Naive thymus-derived CD4-positive, alpha-beta T cell (primary cell): ENCODE measurements at regions of chr3 and their contacts with region 1.

Region 1: DNA sequence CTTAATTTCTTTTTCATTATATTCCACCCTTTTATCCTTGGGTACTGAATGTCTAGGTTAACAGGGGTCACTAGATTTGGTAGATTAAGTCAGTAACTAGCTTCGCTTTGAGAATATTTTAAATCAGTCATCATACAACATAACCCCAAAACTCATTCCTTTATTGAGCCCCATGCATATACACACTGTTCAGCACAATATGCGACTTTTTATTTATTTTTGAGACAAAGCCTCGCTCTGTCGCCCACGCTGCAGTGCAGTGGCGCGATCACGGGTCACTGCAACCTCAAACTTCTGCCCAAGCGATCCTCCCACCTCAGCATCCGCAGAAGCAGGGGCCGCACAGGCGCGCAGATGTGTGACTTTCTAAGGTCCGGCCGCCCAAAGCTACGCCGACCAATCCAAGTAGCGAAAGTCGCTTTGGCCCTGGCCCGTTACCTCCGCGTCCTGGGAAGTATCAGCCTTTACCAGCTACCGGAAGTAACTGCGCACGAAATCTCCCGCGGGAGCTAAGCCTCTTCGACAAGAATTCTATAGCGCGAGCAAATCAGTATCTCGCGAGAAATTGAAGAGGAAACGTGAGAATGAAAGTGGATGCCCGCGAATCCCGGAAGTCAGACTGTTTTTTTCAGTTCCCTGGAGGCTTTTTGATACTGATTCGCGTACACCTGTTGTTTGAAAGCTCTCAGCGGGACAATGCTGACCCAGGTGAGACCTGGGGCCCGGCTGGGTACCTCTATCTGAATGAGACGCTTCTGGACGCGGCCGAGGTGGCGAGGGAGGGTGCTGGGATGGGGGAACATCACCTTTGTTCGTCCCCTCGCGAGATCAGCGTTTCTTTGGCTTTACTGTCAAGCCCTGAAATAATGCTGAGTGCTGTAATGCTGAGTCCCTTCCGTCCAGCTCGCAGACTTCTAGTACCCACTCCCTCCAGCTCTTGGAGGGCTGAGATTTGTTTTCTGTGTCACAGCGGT is at the starts of genes DHFR2 and NSUN3:
- DNase-seq: peak; percentile 70 to 94 (median 90)
- ATAC-seq: peak; percentile 90
- H3K4me3 ChIP-seq: peak within 1 kb of the TSS; percentile 71
- H3K4me3 Mint-ChIP-seq: peak within 1 kb of the TSS; percentile 93 to 100 (median 98)
- H3K27ac ChIP-seq: peak within 1 kb of the TSS; percentile 94
- H3K27ac Mint-ChIP-seq: peak within 1 kb of the TSS; percentile 98 to 100 (median 100)
- H3K4me1 ChIP-seq: peaks cover 18 to 20% of the 10 kb centered on the region in 2 donors
- H3K4me1 Mint-ChIP-seq: peaks cover 30 to 73% (median 59%) of the 10 kb centered on the region in 7 donors
- H3K27me3 ChIP-seq: no peaks in the 10 kb centered on the region
- H3K27me3 Mint-ChIP-seq: no peaks in the 10 kb centered on the region
- total RNA-seq, gene DHFR2: 1.5 to 17.9 (median 9.0) TPM
- total RNA-seq, gene NSUN3: 19.9 to 24.0 (median 20.5) TPM

Region 2: DNA sequence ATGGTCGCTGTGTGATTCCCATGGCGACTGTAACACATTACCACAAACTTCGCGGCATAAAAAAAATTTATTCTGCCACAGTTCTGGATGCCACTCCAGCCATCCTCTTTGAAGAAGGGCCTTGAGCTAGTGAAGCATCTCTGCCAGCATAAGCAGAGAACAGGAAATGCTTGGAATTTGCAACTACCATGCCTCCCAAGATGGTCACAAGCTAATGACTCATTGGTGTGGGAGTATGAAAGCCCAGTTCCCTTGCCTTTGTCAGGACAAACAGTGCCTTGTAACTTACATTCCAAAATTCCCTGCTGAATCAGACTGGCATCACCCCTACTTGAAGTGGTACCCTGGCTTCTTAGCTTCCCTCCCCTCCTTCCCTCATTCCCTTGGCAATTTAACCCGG is 218.7 kb before region 1 on chr3:
- CTCF ChIA-PET with region 1: no interaction called
- POLR2A ChIA-PET with region 1: no interaction called
- intact Hi-C with region 1: loop called in 1 of 2 experiments (anchors 10 kb)
- DNase-seq: no peak
- ATAC-seq: no peak
- H3K4me3 ChIP-seq: no peak overlapping the region
- H3K4me3 Mint-ChIP-seq: no peak overlapping the region
- H3K27ac ChIP-seq: no peak overlapping the region
- H3K27ac Mint-ChIP-seq: no peak overlapping the region
- H3K4me1 ChIP-seq: no peaks in the 10 kb centered on the region
- H3K4me1 Mint-ChIP-seq: peaks cover 0 to 6% (median 0%) of the 10 kb centered on the region in 7 donors
- H3K27me3 ChIP-seq: peaks cover 0 to 3% of the 10 kb centered on the region in 2 donors
- H3K27me3 Mint-ChIP-seq: peaks cover 0 to 6% (median 0%) of the 10 kb centered on the region in 5 donors

Region 3: GRCh38 chr3:93979833-93980676 is 82.7 kb before region 1 on chr3 and contains the start of gene ARL13B:
- CTCF ChIA-PET with region 1: no interaction called
- POLR2A ChIA-PET with region 1: interaction called, 6 read pairs
- intact Hi-C with region 1: loop called (anchors 1 kb)
- DNase-seq: peak; percentile 81 to 95 (median 91)
- ATAC-seq: peak; percentile 100
- H3K4me3 ChIP-seq: peak within 1 kb of the TSS; percentile 95
- H3K4me3 Mint-ChIP-seq: peak within 1 kb of the TSS; percentile 85 to 94 (median 88)
- H3K27ac ChIP-seq: peak within 1 kb of the TSS; percentile 86
- H3K27ac Mint-ChIP-seq: peak within 1 kb of the TSS; percentile 76 to 95 (median 89)
- H3K4me1 ChIP-seq: peaks cover 6% of the 10 kb centered on the region in 2 donors
- H3K4me1 Mint-ChIP-seq: peaks cover 6 to 38% (median 26%) of the 10 kb centered on the region in 7 donors
- H3K27me3 ChIP-seq: no peaks in the 10 kb centered on the region
- H3K27me3 Mint-ChIP-seq: peaks cover 0 to 4% (median 0%) of the 10 kb centered on the region in 5 donors
- total RNA-seq, gene ARL13B: 5.3 to 10.2 (median 7.0) TPM

Region 4: GRCh38 chr3:94081884-94082283 is 19.2 kb after region 1 on chr3:
- CTCF ChIA-PET with region 1: no interaction called
- POLR2A ChIA-PET with region 1: no interaction called
- intact Hi-C with region 1: loop called (anchors 2 kb)
- DNase-seq: no peak
- ATAC-seq: no peak
- H3K4me3 ChIP-seq: no peak overlapping the region
- H3K4me3 Mint-ChIP-seq: no peak overlapping the region
- H3K27ac ChIP-seq: no peak overlapping the region
- H3K27ac Mint-ChIP-seq: peak overlapping the region in 2 of 9 donors; percentile 9 to 77
- H3K4me1 ChIP-seq: peaks cover 3 to 10% of the 10 kb centered on the region in 2 donors
- H3K4me1 Mint-ChIP-seq: peaks cover 29 to 59% (median 52%) of the 10 kb centered on the region in 7 donors
- H3K27me3 ChIP-seq: no peaks in the 10 kb centered on the region
- H3K27me3 Mint-ChIP-seq: no peaks in the 10 kb centered on the region